Pancreas (tissue), 10 donors: ENCODE measurements at regions of chr17 and their contacts with region 1.

Region 1: DNA sequence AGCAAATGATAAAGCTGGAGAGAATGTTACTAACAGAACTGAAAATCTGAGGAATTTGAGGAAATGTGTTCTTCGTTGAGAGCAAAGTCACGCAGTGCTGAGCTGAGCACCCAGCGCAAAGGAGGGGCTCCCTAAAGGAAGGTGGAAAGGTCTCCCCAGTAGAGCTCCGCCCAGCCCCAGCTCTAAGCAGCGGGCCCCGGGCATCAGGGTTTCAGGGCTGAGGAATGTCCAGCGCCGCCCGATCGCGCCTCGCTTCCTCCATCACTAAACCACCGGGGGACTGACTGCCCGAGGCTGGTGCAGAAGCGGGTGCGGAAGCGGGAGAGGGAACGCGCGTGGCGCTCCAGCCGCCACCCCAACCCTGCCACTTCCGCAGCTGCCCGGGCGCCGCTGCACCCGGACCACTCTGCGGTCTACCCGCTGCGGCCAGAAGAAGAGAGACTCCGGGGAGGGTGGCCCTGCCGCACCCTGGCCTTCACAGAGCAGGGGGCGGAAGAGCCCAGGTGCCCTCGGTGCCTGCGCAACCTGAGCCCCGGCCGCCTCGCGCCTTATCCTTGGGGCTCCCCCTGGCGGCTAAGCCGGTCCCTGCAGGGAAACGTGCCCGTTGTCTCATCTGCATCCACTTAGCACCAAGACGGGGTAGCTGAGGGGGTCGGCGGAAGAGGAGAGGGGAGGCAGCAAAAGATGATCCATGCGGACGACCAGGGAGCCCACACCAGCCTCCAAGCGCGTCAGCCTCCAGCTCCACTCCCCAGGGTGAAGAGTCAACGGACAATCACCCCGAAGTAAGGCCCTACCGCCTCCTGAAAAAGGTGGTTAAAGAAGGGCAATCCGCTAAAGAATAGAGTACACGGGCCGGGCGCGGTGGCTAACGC is 12.4 kb upstream of the GUCY2D start:
- DNase-seq: peak; percentile 72 to 99 (median 87)
- ATAC-seq: peak; percentile 87 to 96 (median 95)
- H3K4me3 ChIP-seq: peak overlapping the region; percentile 33 to 61 (median 53)
- H3K27ac ChIP-seq: peak overlapping the region in 3 of 4 donors; percentile 14 to 77 (median 57)
- H3K4me1 ChIP-seq: no peaks in the 10 kb centered on the region
- H3K27me3 ChIP-seq: no peaks in the 10 kb centered on the region
- CTCF ChIP-seq: peak; percentile 90 to 94 (median 92)

Region 2: DNA sequence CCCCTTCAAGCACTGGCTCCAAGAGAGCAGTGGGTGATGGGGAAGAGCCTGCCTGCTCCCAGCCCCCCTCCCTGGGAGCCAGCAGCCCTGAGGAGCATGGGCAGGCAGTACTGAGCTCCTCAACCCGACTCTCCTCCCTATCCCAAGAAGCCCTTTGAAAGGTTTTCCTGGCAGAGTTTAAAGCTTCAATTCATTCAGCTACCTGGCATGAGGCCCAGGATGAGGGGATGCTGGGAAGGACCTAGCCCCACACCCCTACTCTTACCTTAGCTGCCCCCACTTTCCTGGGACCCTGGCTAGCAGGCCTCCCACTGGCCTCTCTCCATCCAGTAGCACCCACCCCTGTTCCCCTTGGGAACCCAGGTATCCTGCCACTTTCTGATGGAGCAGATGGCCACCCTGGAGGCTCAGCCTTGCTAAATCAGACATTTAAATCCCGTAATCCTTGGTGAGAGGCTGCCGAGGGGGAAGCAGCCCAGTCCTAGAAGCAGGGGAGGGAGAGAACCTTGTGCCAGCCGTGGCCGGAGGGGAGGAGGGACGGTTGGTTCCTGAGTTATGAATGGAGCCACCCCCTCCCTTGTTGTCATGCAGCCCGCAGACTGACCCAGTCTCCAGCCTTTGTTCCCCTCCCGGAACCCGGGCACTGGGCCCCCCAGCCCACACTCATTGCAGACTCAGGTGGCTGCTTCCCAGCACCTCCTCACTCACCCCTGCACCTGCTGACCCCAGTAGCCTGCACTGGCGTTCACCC is 322.2 kb before region 1 on chr17:
- intact Hi-C with region 1: no loop called
- DNase-seq: no peak
- ATAC-seq: peak in 1 of 4 donors; percentile 20
- H3K4me3 ChIP-seq: no peak overlapping the region
- H3K27ac ChIP-seq: no peak overlapping the region
- H3K4me1 ChIP-seq: no peaks in the 10 kb centered on the region
- H3K27me3 ChIP-seq: no peaks in the 10 kb centered on the region
- CTCF ChIP-seq: no peak

Region 3: DNA sequence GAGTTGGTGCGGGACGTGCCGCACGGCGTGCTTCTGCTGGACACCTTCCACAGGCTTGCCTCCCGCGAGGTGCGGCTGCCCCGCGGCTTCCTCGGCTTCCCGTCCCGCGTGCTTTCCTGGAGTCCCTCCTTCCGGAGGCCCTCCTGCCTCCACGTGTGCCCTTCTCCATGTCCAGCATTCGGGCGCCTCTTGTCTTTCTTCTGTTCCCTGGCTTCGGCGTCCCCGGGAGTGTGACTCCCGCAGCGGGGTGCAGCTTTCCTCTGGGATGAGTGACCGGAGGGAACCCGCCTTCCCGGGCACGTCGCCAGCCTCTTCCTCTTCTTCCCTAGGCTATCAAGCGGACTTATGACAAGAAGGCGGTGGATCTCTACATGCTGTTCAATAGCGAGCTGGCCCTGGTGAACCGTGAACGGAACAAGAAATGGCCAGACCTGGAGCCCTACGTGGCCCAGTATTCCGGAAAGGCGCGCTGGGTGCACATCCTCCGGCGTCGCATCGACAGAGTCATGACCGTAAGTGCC is 249.5 kb before region 1 on chr17:
- intact Hi-C with region 1: loop called in 2 of 3 experiments (anchors 5 to 10 kb)
- DNase-seq: peak in 2 of 6 donors; percentile 52 to 54
- ATAC-seq: no peak
- H3K4me3 ChIP-seq: no peak overlapping the region
- H3K27ac ChIP-seq: no peak overlapping the region
- H3K4me1 ChIP-seq: no peaks in the 10 kb centered on the region
- H3K27me3 ChIP-seq: no peaks in the 10 kb centered on the region
- CTCF ChIP-seq: no peak

Region 4: DNA sequence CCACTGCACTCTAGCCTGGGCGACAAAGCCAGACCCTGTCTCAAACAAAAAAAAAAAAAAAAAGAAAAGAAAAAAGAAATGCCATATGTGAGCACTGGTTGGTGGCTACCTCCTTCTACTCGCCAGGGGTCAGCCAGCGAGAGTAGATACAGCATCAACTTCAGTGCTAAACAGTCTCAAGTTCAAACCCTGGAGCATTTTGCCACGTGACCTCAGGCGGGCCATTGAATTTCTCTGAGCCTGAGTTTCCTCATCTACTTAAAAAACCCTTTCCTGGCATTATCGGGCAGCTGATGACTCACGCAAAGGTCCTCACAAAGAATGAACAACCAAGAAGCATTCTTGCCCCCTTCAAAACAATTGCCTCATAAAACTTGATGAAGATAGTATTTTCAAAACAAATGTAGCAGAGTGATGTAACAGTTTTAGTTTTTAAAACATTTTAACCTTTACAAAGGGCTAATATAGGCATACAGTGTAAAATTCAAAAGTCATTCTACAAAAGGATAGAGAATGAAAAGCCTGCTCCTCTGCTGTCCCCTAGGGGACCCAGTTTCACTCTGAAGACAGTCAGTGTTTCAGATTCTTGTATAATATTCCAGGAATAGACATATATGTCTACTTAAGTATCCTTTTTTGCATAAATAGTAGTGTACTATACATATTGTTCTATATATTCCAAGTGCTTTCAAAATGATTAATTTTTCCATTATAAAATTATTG is 244.1 kb before region 1 on chr17:
- intact Hi-C with region 1: loop called in 2 of 3 experiments (anchors 5 to 10 kb)
- DNase-seq: peak in 1 of 6 donors; percentile 15
- ATAC-seq: no peak
- H3K4me3 ChIP-seq: no peak overlapping the region
- H3K27ac ChIP-seq: no peak overlapping the region
- H3K4me1 ChIP-seq: no peaks in the 10 kb centered on the region
- H3K27me3 ChIP-seq: no peaks in the 10 kb centered on the region
- CTCF ChIP-seq: no peak

Region 5: GRCh38 chr17:7862692-7863437 is 127.2 kb before region 1 on chr17:
- intact Hi-C with region 1: loop called in 1 of 3 experiments (anchors 10 kb)
- DNase-seq: peak in 4 of 6 donors; percentile 31 to 54 (median 33)
- ATAC-seq: no peak
- H3K4me3 ChIP-seq: no peak overlapping the region
- H3K27ac ChIP-seq: no peak overlapping the region
- H3K4me1 ChIP-seq: peaks cover 0 to 7% (median 5%) of the 10 kb centered on the region in 3 donors
- H3K27me3 ChIP-seq: no peaks in the 10 kb centered on the region
- CTCF ChIP-seq: peak; percentile 48 to 73 (median 66)

Region 6: GRCh38 chr17:7912927-7913524 is 77.0 kb before region 1 on chr17:
- intact Hi-C with region 1: loop called in 2 of 3 experiments (anchors 5 kb)
- DNase-seq: peak in 1 of 6 donors; percentile 43
- ATAC-seq: peak; percentile 29 to 52 (median 47)
- H3K4me3 ChIP-seq: no peak overlapping the region
- H3K27ac ChIP-seq: peak overlapping the region in 1 of 4 donors; percentile 44
- H3K4me1 ChIP-seq: peaks cover 0 to 15% (median 6%) of the 10 kb centered on the region in 3 donors
- H3K27me3 ChIP-seq: no peaks in the 10 kb centered on the region
- CTCF ChIP-seq: peak; percentile 34 to 56 (median 47)

Region 7: DNA sequence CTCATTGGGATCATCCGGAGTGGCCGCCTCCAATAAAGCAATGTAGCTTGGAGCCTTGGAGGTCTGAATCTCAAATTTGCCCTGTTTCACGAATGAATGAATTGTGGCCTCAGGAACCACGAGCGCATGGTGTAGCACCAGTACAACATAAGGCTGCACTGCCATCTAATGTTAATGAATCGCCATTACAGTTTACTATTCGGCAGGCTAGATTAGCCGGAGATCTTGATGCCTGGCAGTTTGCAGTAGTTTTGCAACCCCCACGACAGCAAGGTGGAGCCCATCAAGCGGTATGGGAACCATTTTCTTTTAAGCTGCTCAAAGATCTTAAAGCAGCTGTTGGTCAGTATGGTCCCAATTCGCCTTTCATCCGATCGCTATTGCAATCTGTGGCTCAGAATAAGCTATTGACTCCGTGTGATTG is 67.7 kb after region 1 on chr17:
- intact Hi-C with region 1: no loop called
- DNase-seq: peak in 3 of 6 donors; percentile 31 to 62 (median 38)
- ATAC-seq: peak; percentile 83 to 91 (median 86)
- H3K4me3 ChIP-seq: no peak overlapping the region
- H3K27ac ChIP-seq: no peak overlapping the region
- H3K4me1 ChIP-seq: peaks cover 0 to 18% (median 0%) of the 10 kb centered on the region in 3 donors
- H3K27me3 ChIP-seq: peaks cover 0 to 15% (median 0%) of the 10 kb centered on the region in 4 donors
- CTCF ChIP-seq: peak; percentile 39 to 66 (median 56)

Region 8: DNA sequence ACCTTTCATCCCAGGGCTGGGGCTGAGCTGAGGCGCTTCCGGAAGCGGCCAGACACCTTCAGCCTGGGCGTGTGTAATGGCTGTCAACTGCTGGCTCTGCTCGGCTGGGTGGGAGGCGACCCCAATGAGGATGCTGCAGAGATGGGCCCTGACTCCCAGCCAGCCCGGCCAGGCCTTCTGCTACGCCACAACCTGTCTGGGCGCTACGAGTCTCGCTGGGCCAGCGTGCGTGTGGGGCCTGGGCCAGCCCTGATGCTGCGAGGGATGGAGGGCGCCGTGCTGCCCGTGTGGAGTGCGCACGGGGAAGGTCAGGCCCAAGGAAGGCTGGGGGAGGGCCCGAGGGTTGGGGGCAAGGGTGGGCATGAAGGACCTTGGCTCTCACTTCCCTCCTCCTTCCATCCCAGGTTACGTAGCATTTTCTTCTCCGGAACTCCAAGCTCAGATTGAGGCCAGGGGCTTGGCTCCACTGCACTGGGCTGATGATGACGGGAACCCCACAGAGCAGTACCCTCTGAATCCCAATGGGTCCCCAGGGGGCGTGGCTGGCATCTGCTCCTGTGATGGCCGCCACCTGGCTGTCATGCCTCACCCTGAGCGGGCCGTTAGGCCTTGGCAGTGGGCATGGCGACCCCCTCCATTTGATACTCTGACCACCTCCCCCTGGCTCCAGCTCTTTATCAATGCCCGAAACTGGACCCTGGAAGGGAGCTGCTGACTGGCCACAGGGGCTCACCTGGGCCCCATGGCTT is 278.7 kb after region 1 on chr17:
- intact Hi-C with region 1: no loop called
- DNase-seq: no peak
- ATAC-seq: no peak
- H3K4me3 ChIP-seq: no peak overlapping the region
- H3K27ac ChIP-seq: no peak overlapping the region
- H3K4me1 ChIP-seq: peaks cover 0 to 11% (median 9%) of the 10 kb centered on the region in 3 donors
- H3K27me3 ChIP-seq: no peaks in the 10 kb centered on the region
- CTCF ChIP-seq: no peak